IMR-90 (cell line): ENCODE measurements at regions of chr3 and their contacts with region 1.

Region 1: DNA sequence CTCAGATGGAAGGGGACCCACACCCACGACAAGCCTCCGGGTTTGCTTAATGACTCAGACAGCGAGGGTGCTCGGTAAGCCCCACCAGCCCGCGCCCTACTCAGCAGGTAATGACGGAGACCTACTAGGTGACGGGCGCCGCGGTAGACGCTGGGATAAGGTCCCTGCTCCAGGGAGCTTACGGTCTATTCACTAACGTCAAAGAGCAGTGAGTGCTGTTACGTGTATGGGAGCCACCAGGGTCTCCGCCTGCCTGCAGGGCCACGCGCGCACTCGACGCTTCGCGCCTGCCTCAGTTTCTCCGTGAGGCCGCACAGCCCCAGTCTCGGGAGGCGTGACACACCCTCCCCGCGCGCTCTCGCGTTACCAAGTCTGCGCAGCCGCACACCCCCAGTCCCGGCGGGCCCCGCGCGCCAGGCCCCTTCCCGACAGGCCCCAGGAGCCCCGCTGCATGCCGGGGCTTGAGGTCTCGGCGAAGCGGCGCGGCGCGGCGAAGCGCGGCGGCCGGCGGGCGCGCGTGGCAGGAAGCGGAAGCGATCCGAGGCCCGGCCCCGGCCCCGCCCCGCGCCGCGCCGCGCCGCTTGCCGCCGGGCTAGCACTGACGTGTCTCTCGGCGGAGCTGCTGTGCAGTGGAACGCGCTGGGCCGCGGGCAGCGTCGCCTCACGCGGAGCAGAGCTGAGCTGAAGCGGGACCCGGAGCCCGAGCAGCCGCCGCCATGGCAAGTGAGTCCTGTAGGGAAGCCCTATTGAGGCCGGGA is at the start of gene SEC61A1:
- DNase-seq: peak; percentile 92
- ATAC-seq: peak; percentile 95
- H3K4me3 ChIP-seq: peak within 1 kb of the TSS; percentile 94
- H3K27ac ChIP-seq: peak within 1 kb of the TSS; percentile 95
- H3K4me1 ChIP-seq: peaks cover 7% of the 10 kb centered on the region
- H3K27me3 ChIP-seq: peaks cover 2% of the 10 kb centered on the region
- CTCF ChIP-seq: no peak
- POLR2A ChIP-seq: peak; percentile 98
- RAD21 ChIP-seq: no peak
- total RNA-seq, gene SEC61A1: 478 and 487 TPM in 2 replicates

Region 2: GRCh38 chr3:127590593-127591477 is 461.2 kb before region 1 on chr3 and contains the start of gene TPRA1:
- CTCF ChIA-PET with region 1: no interaction called
- POLR2A ChIA-PET with region 1: no interaction called
- dilution Hi-C with region 1: no loop called
- in situ Hi-C with region 1: no loop called
- intact Hi-C with region 1: loop called (anchors 5 kb)
- DNase-seq: peak; percentile 96
- ATAC-seq: peak; percentile 77
- H3K4me3 ChIP-seq: peak within 1 kb of the TSS; percentile 51
- H3K27ac ChIP-seq: peak within 1 kb of the TSS; percentile 86
- H3K4me1 ChIP-seq: peaks cover 15% of the 10 kb centered on the region
- H3K27me3 ChIP-seq: no peaks in the 10 kb centered on the region
- CTCF ChIP-seq: peak; percentile 38
- POLR2A ChIP-seq: peak; percentile 78
- RAD21 ChIP-seq: peak; percentile 40
- total RNA-seq, gene TPRA1: 15.3 and 17.9 TPM in 2 replicates

Region 3: DNA sequence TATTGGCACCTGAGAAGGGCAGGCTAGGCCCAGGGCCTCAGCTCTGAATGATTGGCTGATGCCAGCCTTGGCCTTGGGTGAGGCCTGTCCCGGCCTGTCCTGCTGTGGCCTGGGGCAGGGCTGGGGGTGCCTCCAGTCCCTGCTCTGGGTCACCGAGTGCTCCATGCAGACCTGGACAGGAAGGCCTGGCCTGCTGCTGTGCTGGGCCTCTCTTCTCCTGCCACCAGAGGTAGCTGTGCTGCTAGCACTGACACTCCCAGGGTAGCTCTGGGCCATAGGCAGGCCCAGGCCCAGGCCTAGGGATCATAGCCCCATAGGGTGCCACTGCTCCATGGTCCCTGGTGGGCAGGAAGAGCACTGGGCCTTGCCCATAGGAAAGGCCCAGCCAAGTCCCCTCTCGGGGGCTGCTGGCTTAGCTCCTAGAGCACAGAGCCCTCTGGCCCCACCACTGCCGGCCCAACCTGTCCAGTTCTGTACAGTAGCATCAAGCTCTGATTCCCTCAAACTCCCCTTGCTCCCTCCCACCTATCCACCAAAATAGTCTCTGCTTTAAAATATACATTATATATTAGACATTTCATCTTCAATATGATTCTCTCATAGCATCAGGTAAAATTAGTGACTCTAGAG is 361.1 kb before region 1 on chr3:
- CTCF ChIA-PET with region 1: no interaction called
- POLR2A ChIA-PET with region 1: no interaction called
- dilution Hi-C with region 1: no loop called
- in situ Hi-C with region 1: no loop called
- intact Hi-C with region 1: loop called (anchors 2 kb)
- DNase-seq: peak; percentile 70
- ATAC-seq: peak; percentile 73
- H3K4me3 ChIP-seq: no peak overlapping the region
- H3K27ac ChIP-seq: peak overlapping the region; percentile 80
- H3K4me1 ChIP-seq: peaks cover 26% of the 10 kb centered on the region
- H3K27me3 ChIP-seq: no peaks in the 10 kb centered on the region
- CTCF ChIP-seq: peak; percentile 74
- POLR2A ChIP-seq: no peak
- RAD21 ChIP-seq: peak; percentile 78

Region 4: GRCh38 chr3:127970966-127971592 is 80.9 kb before region 1 on chr3:
- CTCF ChIA-PET with region 1: no interaction called
- POLR2A ChIA-PET with region 1: no interaction called
- dilution Hi-C with region 1: no loop called
- in situ Hi-C with region 1: no loop called
- intact Hi-C with region 1: no loop called
- DNase-seq: peak; percentile 60
- ATAC-seq: peak; percentile 86
- H3K4me3 ChIP-seq: no peak overlapping the region
- H3K27ac ChIP-seq: no peak overlapping the region
- H3K4me1 ChIP-seq: no peaks in the 10 kb centered on the region
- H3K27me3 ChIP-seq: peaks cover 51% of the 10 kb centered on the region
- CTCF ChIP-seq: peak; percentile 72
- POLR2A ChIP-seq: no peak
- RAD21 ChIP-seq: peak; percentile 86